H1 (cell line): ENCODE measurements at regions of chr16 and their contacts with region 1.

Region 1: DNA sequence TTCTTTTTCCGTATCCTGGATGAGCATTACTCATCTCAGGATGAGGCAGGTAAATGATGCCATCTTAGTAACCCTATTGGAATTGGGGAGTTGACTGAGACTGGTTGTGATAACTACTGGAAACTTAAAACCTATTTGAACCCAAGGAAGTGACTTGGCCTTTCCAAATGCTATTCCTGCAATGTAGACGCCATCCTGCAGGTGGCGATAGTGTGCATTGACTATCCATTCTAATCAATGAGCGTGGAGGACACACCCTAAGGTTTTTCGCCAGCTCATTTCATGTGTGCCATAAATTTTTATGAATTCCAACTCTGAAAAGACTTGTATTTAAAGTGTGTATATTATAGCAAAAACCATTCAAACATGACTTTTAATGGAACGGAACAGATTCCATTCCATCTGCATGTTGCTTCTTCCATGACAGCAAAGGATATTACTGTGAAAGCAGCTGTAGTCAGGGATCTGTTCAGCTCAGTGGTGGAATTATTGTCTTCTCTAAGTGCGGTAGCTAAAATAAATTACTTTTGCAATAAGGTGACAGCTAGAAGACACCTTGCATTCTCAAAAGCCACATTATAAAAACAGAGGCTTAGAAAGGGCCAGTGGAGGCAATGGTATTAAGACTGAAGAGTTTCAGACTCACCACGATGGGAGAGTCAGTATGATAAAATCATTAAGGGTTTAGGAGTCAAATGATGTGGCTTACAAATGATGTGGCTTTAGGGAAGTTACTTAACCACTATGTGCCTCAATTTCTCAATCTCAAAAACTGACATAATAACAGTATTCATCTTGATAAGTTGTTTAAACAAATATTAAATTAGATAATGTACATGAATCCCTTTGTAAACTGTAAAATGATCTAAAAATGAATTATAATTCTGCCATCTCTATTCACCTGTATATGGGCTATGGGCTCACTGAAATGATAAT is 55.5 kb downstream of the SYT17 start:
- DNase-seq: peak; percentile 36 to 89
- H3K4me3 ChIP-seq: no peak overlapping the region
- H3K27ac ChIP-seq: no peak overlapping the region
- H3K4me1 ChIP-seq: peaks cover 0 to 4% (median 0%) of the 10 kb centered on the region in 4 experiments; a peak in 3 of 7 replicates
- H3K27me3 ChIP-seq: no peaks in the 10 kb centered on the region
- CTCF ChIP-seq: peak; percentile 29 to 88 (median 64)
- EP300 ChIP-seq: no peak
- POLR2A ChIP-seq: no peak
- RAD21 ChIP-seq: peak; percentile 69 to 74

Region 2: GRCh38 chr16:19033761-19034160 is 189.7 kb before region 1 on chr16:
- CTCF ChIA-PET with region 1: no interaction called
- POLR2A ChIA-PET with region 1: no interaction called
- DNase-seq: no peak
- H3K4me3 ChIP-seq: no peak overlapping the region
- H3K27ac ChIP-seq: no peak overlapping the region
- H3K4me1 ChIP-seq: no peaks in the 10 kb centered on the region
- H3K27me3 ChIP-seq: no peaks in the 10 kb centered on the region
- CTCF ChIP-seq: no peak
- EP300 ChIP-seq: no peak
- POLR2A ChIP-seq: no peak
- RAD21 ChIP-seq: no peak

Region 3: GRCh38 chr16:19238406-19238805 is 14.9 kb after region 1 on chr16:
- CTCF ChIA-PET with region 1: interaction called, 10 read pairs
- POLR2A ChIA-PET with region 1: interaction called, 3 read pairs
- DNase-seq: no peak
- H3K4me3 ChIP-seq: no peak overlapping the region
- H3K27ac ChIP-seq: no peak overlapping the region
- H3K4me1 ChIP-seq: no peaks in the 10 kb centered on the region
- H3K27me3 ChIP-seq: no peaks in the 10 kb centered on the region
- CTCF ChIP-seq: no peak
- EP300 ChIP-seq: no peak
- POLR2A ChIP-seq: no peak
- RAD21 ChIP-seq: no peak

Region 4: DNA sequence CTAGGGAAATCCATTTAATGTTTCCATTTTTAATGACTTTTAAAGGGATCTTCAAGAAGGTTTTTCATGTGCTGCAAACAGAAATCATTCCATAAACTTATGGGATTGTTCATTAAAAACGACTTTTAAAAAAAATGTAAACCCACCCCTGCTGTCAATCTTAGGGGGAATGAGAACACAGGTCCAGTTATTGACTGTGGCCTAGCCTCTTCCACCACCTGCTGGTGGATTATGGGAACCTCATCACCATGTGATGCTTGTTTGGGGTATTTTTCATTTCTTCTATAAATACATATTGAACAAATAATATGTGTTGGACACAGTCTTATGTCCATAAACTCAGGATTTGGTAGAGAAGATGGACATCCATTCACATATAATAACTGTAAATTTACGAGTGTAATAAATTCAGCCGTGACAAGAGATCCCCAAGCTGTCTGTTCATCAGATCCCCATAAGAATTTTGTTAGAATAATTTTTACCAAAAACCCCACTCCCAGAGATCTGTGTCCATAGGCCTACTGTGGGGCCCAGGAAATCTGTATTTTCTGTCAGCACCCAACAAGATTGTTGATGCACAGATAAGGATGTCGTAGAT is 152.2 kb after region 1 on chr16:
- CTCF ChIA-PET with region 1: interaction called, 19 read pairs
- POLR2A ChIA-PET with region 1: no interaction called
- DNase-seq: peak in 1 of 2 experiments; percentile 2
- H3K4me3 ChIP-seq: no peak overlapping the region
- H3K27ac ChIP-seq: no peak overlapping the region
- H3K4me1 ChIP-seq: no peaks in the 10 kb centered on the region
- H3K27me3 ChIP-seq: no peaks in the 10 kb centered on the region
- CTCF ChIP-seq: peak; percentile 40 to 89 (median 77)
- EP300 ChIP-seq: no peak
- POLR2A ChIP-seq: no peak
- RAD21 ChIP-seq: peak; percentile 98 to 99